ENCODE measurements at regions of chr17 and their contacts with region 1.

Region 1: DNA sequence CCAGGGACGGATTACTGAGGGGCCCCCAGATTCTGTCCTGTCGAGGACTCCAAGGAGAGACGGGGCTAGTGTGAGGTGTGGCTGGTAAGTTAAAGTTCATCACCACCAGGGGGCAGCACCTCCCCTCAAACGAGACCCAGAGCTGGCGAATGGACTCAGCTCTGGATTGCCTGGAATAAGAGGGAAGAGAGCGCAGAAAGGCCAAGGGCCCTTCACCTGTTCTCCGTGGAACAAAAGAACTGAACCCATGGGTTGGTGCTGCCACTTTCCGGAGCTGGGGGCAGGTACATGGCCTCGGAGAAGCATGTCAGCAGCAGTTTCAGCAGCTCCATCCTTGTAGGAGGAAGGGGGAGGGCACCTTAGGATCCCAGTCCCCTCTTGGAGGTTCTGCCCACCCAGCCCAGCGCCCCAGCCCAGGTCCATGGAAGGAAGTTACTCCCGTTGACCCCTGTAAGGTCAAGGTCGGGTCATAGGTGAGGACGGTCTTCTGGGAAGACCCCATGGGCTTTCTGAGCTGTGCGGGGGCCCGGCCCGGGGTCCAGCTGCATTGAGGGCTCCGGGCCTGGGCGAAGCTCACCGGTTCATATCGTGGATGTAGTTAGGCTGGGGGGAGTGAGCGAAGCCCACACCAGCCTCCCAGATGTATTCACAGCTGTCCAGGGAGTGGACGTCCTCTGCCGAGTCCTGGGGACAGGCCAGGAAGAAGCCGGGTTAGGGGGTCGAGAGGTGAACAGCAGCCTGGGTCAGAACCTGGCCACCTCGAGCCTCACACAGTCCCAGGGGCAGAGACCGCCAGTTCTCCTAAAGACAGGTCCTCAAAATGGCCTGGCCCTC is 10.7 kb downstream of the HID1 start:
- DNase-seq: peak; percentile 87
- CTCF ChIP-seq: peak; percentile 74

Region 2: GRCh38 chr17:74118504-74118903 is 843.4 kb before region 1 on chr17:
- CTCF ChIA-PET with region 1: no interaction called
- POLR2A ChIA-PET with region 1: no interaction called
- DNase-seq: no peak
- CTCF ChIP-seq: no peak

Region 3: DNA sequence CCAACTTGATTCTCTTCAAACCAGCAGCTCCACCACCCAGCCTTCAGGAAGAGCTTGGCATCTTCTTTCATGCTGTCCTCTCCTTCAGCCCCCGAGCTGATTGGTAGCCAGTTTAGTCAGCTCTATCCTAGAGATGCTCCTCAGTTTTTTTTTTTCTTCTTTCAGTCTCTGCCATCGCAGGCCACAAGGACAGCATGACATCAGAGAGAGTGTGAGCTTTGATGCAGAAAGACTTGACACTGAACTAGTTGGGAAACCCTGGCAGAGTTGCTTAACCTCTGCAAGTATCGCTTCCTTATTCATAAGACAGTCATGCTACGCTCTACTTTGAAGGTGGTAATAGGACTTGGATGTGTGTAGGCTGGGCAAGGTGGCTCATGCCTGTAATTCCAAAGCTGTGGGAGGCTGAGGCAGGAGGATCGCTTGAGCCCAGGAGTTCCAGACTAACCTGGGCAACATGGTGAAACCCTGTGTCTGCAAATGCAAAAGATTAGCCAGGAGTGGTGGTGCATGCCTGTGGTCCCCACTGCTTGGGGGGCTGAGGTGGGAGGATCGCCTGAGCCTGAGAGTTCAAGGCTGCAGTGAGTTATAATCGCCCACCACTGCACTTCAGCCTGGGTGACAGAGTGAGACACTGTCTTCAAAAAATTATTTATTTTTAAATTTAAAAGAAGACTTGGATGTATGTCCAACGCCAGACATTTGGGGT is 433.2 kb before region 1 on chr17:
- CTCF ChIA-PET with region 1: no interaction called
- POLR2A ChIA-PET with region 1: no interaction called
- DNase-seq: peak; percentile 77
- CTCF ChIP-seq: no peak

Region 4: DNA sequence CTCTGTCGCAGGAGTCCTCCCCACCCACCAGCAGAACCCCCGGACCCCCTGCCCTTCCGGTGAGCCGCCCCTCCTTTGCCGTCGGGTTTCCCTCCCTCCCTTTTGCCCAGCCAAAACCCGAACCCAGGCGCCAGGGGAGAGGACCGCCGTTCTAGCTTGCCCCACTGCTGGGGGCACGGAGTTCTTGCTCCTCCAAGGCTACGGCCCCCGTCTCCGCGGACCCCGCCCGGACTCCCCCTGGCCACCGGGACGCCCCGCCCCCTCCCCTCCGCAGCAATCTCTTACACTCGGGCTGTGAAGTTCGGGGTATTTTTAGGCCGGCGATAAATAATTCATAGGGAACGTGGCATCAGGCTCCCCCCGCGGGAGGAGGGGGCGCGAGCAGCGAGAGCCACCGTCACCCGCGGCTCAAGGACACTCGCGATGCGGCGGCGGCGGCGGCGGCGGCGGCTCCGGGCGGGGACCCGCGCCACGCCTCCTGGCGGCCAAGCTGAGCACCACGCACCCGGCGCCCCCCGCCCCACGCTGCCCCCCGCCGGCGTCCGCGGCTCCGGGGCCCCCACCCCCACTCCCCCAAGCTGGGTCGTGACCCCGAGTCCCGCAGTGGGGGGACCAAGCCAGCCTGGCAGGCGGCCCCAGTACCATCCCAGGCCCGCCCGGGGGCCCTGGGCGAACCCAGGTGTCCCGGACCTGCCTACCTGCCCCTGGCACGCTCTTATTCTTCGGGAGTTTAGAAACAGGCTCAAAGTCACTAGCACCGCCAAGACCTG is 102.2 kb before region 1 on chr17 and contains the start of gene GRIN2C:
- CTCF ChIA-PET with region 1: interaction called, 13 read pairs
- POLR2A ChIA-PET with region 1: no interaction called
- DNase-seq: peak; percentile 53
- CTCF ChIP-seq: peak; percentile 16

Region 5: DNA sequence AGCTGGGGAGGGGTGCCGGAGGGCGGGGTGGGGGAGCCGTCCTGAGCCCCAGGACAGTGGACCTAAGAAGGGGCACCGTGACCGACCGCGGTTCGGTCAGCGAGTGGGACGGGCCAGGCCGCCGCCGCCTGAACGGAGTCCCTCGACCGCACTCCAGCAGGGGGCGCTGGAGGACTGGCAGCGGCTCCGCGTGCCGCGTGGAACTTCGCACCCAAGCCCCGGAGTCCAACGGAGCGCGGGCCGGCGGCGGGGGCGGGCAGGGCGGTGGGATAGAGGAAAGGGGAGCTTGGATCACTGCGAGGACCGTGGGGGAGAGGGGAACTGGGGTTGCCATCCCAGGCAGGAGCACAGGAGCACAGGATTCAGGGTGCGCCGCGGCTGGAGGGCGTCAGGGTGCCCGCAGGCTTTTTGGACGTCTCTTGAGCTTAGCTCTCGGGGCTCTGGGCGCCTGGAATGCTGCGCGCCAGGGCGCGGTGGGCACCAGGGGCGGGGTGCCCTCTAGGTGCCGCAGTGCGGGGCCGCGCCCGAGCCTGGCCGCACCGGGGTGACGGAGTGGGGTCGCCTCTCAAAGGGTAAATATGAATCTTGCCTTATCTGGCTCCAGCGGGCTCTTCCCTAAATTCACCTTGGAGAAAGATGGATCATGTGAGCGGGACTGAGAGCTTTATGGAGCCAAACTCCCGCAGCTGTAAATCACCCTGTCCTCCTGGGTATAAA is 38.2 kb before region 1 on chr17:
- CTCF ChIA-PET with region 1: interaction called, 390 read pairs
- POLR2A ChIA-PET with region 1: interaction called, 6 read pairs
- DNase-seq: peak; percentile 87
- CTCF ChIP-seq: peak; percentile 89

Region 6: GRCh38 chr17:74981979-74982662 is 20.2 kb after region 1 on chr17:
- CTCF ChIA-PET with region 1: interaction called, 148 read pairs
- POLR2A ChIA-PET with region 1: no interaction called
- DNase-seq: peak; percentile 75
- CTCF ChIP-seq: no peak

Region 7: GRCh38 chr17:75024686-75025397 is 63.0 kb after region 1 on chr17:
- CTCF ChIA-PET with region 1: interaction called, 10 read pairs
- POLR2A ChIA-PET with region 1: no interaction called
- DNase-seq: no peak
- CTCF ChIP-seq: no peak

Region 8: GRCh38 chr17:75182569-75183450 is 220.9 kb after region 1 on chr17 and contains the start of gene SUMO2:
- CTCF ChIA-PET with region 1: interaction called, 10 read pairs
- POLR2A ChIA-PET with region 1: no interaction called
- DNase-seq: peak; percentile 99
- CTCF ChIP-seq: no peak

Region 9: GRCh38 chr17:75271233-75271954 is 309.5 kb after region 1 on chr17:
- CTCF ChIA-PET with region 1: interaction called, 15 read pairs
- POLR2A ChIA-PET with region 1: interaction called, 4 read pairs
- DNase-seq: peak; percentile 96
- CTCF ChIP-seq: peak; percentile 96

Region 10: DNA sequence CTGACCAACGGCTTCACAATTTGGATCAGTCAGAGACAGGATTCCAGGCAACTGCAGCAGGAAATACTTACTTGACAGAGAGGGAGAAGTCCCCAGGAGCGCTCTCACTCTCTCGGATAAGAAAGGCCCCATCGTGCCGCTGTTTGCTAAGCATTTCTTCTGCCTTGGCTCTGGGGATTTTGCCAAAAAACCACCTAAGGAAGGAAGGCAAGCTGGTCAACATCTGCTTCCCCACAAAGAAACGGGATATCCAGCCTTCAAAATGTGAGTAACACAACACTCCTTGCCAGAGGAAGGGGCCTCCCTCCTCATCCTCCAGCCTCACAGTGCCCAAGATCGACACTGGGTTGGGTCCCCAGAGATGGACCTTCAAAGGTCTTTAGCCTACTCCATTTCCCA is 364.0 kb after region 1 on chr17:
- CTCF ChIA-PET with region 1: no interaction called
- POLR2A ChIA-PET with region 1: no interaction called
- DNase-seq: no peak
- CTCF ChIP-seq: no peak